ENCODE measurements at regions of chr7 and their contacts with region 1.

Region 1: GRCh38 chr7:134458806-134459698 is at the start of gene AKR1B1:
- DNase-seq: peak; percentile 94
- ATAC-seq: peak; percentile 89
- H3K4me3 ChIP-seq: peak within 1 kb of the TSS; percentile 42 to 90 (median 84)
- H3K4me3 Mint-ChIP-seq: peak within 1 kb of the TSS; percentile 92
- H3K27ac ChIP-seq: peak within 1 kb of the TSS; percentile 53 to 79
- H3K27ac Mint-ChIP-seq: peak within 1 kb of the TSS; percentile 91
- H3K4me1 ChIP-seq: peaks cover 22 to 24% of the 10 kb centered on the region in 2 donors
- H3K4me1 Mint-ChIP-seq: peaks cover 47% of the 10 kb centered on the region
- H3K27me3 ChIP-seq: peaks cover 0 to 3% (median 0%) of the 10 kb centered on the region in 4 experiments
- H3K27me3 Mint-ChIP-seq: no peaks in the 10 kb centered on the region
- CTCF ChIP-seq: peak; percentile 77
- total RNA-seq, gene AKR1B1: 89.6 and 94.7 TPM in 2 replicates

Region 2: GRCh38 chr7:133252858-133253518 is 1206.1 kb before region 1 on chr7 and contains the start of gene EXOC4:
- CTCF ChIA-PET with region 1: no interaction called
- POLR2A ChIA-PET with region 1: no interaction called
- intact Hi-C with region 1: loop called (anchors 2 kb)
- DNase-seq: peak; percentile 97
- ATAC-seq: peak; percentile 99
- H3K4me3 ChIP-seq: peak within 1 kb of the TSS; percentile 66 to 93 (median 89)
- H3K4me3 Mint-ChIP-seq: peak within 1 kb of the TSS; percentile 89
- H3K27ac ChIP-seq: peak within 1 kb of the TSS; percentile 50 to 85
- H3K27ac Mint-ChIP-seq: peak within 1 kb of the TSS; percentile 91
- H3K4me1 ChIP-seq: peaks cover 4 to 7% of the 10 kb centered on the region in 2 donors
- H3K4me1 Mint-ChIP-seq: peaks cover 28% of the 10 kb centered on the region
- H3K27me3 ChIP-seq: no peaks in the 10 kb centered on the region
- H3K27me3 Mint-ChIP-seq: no peaks in the 10 kb centered on the region
- CTCF ChIP-seq: no peak
- total RNA-seq, gene EXOC4: 132 and 135 TPM in 2 replicates

Region 3: GRCh38 chr7:134432296-134433152 is 26.5 kb before region 1 on chr7:
- CTCF ChIA-PET with region 1: interaction called, 53 read pairs
- POLR2A ChIA-PET with region 1: interaction called, 3 read pairs
- intact Hi-C with region 1: loop called (anchors 1 kb)
- DNase-seq: peak; percentile 88
- ATAC-seq: peak; percentile 87
- H3K4me3 ChIP-seq: peak overlapping the region in 4 of 5 experiments; percentile 28 to 57 (median 46)
- H3K4me3 Mint-ChIP-seq: peak overlapping the region; percentile 86
- H3K27ac ChIP-seq: peak overlapping the region; percentile 29 to 62
- H3K27ac Mint-ChIP-seq: peak overlapping the region; percentile 86
- H3K4me1 ChIP-seq: peaks cover 17 to 23% of the 10 kb centered on the region in 2 donors
- H3K4me1 Mint-ChIP-seq: peaks cover 19% of the 10 kb centered on the region
- H3K27me3 ChIP-seq: no peaks in the 10 kb centered on the region
- H3K27me3 Mint-ChIP-seq: peaks cover 4% of the 10 kb centered on the region
- CTCF ChIP-seq: peak; percentile 82

Region 4: GRCh38 chr7:134986363-134987251 is 527.6 kb after region 1 on chr7 and contains the start of gene AGBL3:
- CTCF ChIA-PET with region 1: no interaction called
- POLR2A ChIA-PET with region 1: no interaction called
- intact Hi-C with region 1: loop called (anchors 1 kb)
- DNase-seq: peak; percentile 95
- ATAC-seq: peak; percentile 86
- H3K4me3 ChIP-seq: peak within 1 kb of the TSS; percentile 69 to 97 (median 94)
- H3K4me3 Mint-ChIP-seq: peak within 1 kb of the TSS; percentile 98
- H3K27ac ChIP-seq: peak within 1 kb of the TSS; percentile 88 to 93
- H3K27ac Mint-ChIP-seq: peak within 1 kb of the TSS; percentile 98
- H3K4me1 ChIP-seq: peaks cover 4 to 5% of the 10 kb centered on the region in 2 donors
- H3K4me1 Mint-ChIP-seq: peaks cover 34% of the 10 kb centered on the region
- H3K27me3 ChIP-seq: no peaks in the 10 kb centered on the region
- H3K27me3 Mint-ChIP-seq: no peaks in the 10 kb centered on the region
- CTCF ChIP-seq: peak; percentile 92
- total RNA-seq, gene AGBL3: 10.9 and 11.1 TPM in 2 replicates

Region 5: DNA sequence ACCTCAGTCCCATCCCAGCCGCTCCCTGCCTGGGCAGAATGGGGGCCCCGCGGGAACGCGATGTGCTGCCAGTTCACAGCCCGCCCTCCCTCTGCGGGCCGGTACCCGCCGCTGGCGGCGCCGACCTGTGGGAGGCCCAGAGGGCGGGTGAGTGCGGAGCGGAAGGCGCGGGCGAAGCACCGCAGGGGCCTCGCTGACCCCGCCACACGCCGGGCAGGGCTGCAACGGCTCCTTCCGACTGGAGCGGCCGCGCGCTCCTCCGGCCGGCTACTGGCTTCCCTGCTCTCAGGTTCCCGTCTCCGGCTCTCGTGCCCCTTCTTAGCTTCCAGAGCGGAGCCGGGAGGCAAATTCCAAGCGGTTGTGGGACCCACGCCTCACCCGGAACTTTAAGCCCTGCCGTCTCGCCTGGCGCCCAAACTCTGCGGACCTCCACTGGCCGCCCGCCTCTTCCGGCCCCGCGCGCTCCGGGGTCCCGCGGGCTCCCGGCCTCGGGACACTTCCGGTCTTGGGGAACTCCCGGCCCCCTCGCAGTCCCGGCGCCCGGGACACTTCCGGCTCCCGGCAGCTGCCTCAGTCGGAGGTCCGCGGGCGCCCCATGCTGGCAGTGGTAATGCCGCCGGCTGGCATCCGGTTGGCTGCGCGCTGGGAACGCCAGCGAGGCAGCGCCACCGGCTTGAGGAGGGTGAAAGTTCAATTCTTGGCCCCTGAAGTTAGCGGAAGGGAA is 711.4 kb after region 1 on chr7 and contains the start of gene CYREN:
- CTCF ChIA-PET with region 1: no interaction called
- POLR2A ChIA-PET with region 1: no interaction called
- intact Hi-C with region 1: loop called (anchors 2 kb)
- DNase-seq: peak; percentile 92
- ATAC-seq: peak; percentile 77
- H3K4me3 ChIP-seq: peak within 1 kb of the TSS; percentile 72 to 93 (median 83)
- H3K4me3 Mint-ChIP-seq: peak within 1 kb of the TSS; percentile 94
- H3K27ac ChIP-seq: peak within 1 kb of the TSS; percentile 96 to 97
- H3K27ac Mint-ChIP-seq: peak within 1 kb of the TSS; percentile 93
- H3K4me1 ChIP-seq: peaks cover 22 to 42% of the 10 kb centered on the region in 2 donors
- H3K4me1 Mint-ChIP-seq: peaks cover 60% of the 10 kb centered on the region
- H3K27me3 ChIP-seq: no peaks in the 10 kb centered on the region
- H3K27me3 Mint-ChIP-seq: no peaks in the 10 kb centered on the region
- CTCF ChIP-seq: peak; percentile 77
- total RNA-seq, gene CYREN: 51.6 and 54.6 TPM in 2 replicates

Region 6: GRCh38 chr7:135558337-135558767 is 1099.3 kb after region 1 on chr7:
- CTCF ChIA-PET with region 1: no interaction called
- POLR2A ChIA-PET with region 1: no interaction called
- intact Hi-C with region 1: loop called (anchors 2 kb)
- DNase-seq: peak; percentile 83
- ATAC-seq: peak; percentile 63
- H3K4me3 ChIP-seq: peak overlapping the region; percentile 77 to 100 (median 97)
- H3K4me3 Mint-ChIP-seq: no peak overlapping the region
- H3K27ac ChIP-seq: peak overlapping the region; percentile 95 to 98
- H3K27ac Mint-ChIP-seq: no peak overlapping the region
- H3K4me1 ChIP-seq: peaks cover 3 to 6% of the 10 kb centered on the region in 2 donors
- H3K4me1 Mint-ChIP-seq: peaks cover 14% of the 10 kb centered on the region
- H3K27me3 ChIP-seq: no peaks in the 10 kb centered on the region
- H3K27me3 Mint-ChIP-seq: peaks cover 5% of the 10 kb centered on the region
- CTCF ChIP-seq: peak; percentile 70